ENCODE measurements at regions of chr5 and their contacts with region 1.

Region 1: GRCh38 chr5:112419986-112420864 is 1.1 kb upstream of the EPB41L4A start:
- DNase-seq: peak; percentile 72 to 84
- H3K4me3 ChIP-seq: peak overlapping the region; percentile 58
- H3K4me3 Mint-ChIP-seq: peak overlapping the region; percentile 76
- H3K27ac Mint-ChIP-seq: no peak overlapping the region
- H3K4me1 ChIP-seq: peaks cover 10% of the 10 kb centered on the region
- H3K4me1 Mint-ChIP-seq: peaks cover 8% of the 10 kb centered on the region
- H3K27me3 ChIP-seq: peaks cover 8% of the 10 kb centered on the region
- H3K27me3 Mint-ChIP-seq: peaks cover 25% of the 10 kb centered on the region
- CTCF ChIP-seq: peak; percentile 91 to 92

Region 2: DNA sequence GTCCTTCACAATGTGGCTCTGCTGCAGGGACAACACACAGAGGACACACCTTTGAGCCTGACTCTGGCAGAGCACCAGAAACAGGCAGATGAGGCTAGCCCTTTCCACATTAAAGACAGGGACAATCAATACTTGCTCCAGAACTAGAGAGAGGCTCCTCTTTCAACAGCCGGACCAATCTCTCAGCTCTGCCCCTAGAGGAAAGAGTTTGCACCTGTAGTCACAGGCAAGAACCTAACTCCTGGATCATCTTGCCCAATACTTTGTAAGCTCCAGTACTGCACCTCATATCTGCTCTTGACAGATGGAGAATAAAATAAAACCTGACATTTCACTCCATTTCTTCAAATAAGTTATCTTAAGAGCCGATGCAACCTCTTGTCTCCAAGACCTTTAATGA is 53.2 kb before region 1 on chr5:
- CTCF ChIA-PET with region 1: interaction called, 4 read pairs
- POLR2A ChIA-PET with region 1: no interaction called
- intact Hi-C with region 1: loop called (anchors 5 kb)
- DNase-seq: peak in 1 of 2 experiments; percentile 30
- H3K4me3 ChIP-seq: no peak overlapping the region
- H3K4me3 Mint-ChIP-seq: no peak overlapping the region
- H3K27ac Mint-ChIP-seq: no peak overlapping the region
- H3K4me1 ChIP-seq: no peaks in the 10 kb centered on the region
- H3K4me1 Mint-ChIP-seq: no peaks in the 10 kb centered on the region
- H3K27me3 ChIP-seq: no peaks in the 10 kb centered on the region
- H3K27me3 Mint-ChIP-seq: no peaks in the 10 kb centered on the region
- CTCF ChIP-seq: peak; percentile 27 to 68

Measured in Caco-2 (cell line).